Lower leg skin (tissue), 4 donors: ENCODE measurements at regions of chr4 and their contacts with region 1.

Region 1: DNA sequence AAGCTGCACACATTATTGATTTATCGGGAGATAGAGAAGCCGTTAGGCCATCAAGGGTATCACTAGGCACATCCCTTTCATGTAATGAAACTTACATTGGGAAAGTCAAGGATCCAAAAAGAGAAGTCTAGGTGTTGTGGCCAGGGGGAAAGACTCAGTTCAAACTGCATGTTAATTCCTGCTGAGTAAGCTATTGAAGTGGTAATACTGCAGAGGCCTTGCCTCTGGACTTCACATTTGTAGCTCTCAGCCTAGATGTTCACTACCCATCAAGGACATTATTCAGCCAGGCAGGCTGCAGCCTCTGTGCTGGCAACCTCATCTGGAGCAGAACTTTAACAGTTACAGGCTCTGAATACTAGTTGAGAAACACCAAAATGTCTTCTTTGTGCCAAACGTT is 2094.5 kb upstream of the AGA start:
- DNase-seq: no peak
- H3K4me3 ChIP-seq: no peak overlapping the region
- CTCF ChIP-seq: no peak
- POLR2A ChIP-seq: no peak

Region 2: DNA sequence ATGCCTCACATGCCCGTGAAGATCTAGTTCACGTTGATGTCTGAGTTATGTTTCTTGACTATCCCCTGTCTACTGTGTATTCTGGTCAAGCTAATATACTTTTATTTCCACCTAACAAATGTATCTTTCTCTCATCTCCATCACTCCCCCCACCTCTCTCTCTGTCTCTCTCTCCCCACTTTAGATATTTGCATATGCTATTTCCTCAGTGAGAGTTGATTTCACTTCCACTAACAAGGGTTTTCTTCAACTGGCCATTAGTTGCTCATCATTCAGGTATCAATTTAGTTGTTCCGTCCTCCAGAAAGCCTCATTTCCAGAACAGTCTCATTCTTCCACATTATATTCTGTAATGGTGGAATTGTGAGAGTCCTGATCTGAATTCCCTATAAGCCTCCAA is 928.7 kb after region 1 on chr4:
- intact Hi-C with region 1: loop called (anchors 5 kb)
- DNase-seq: no peak
- H3K4me3 ChIP-seq: no peak overlapping the region
- CTCF ChIP-seq: no peak
- POLR2A ChIP-seq: no peak

Region 3: DNA sequence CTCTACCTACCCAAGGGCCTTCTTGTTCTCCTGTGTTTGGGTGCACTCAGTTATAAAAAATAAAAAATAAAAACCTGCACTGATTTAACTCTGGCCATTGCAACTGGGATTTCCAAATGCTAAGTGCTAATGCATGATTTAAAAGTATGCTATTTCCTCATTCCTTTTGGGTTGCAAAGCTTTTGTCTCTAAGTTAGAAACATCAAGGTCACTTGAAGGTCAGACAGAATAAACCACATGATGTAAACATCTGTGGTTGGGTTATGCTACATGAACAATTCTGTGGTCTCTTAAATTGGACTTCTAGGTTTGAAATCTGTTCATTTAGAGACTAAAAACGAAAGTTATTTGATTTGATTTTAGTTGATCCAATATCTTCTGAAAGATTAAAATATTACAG is 1159.2 kb after region 1 on chr4:
- intact Hi-C with region 1: loop called (anchors 5 kb)
- DNase-seq: no peak
- H3K4me3 ChIP-seq: no peak overlapping the region
- CTCF ChIP-seq: no peak
- POLR2A ChIP-seq: no peak